SK-N-SH (cell line): ENCODE measurements at regions of chr1 and their contacts with region 1.

Region 1: GRCh38 chr1:20633190-20634064 is at the start of gene PINK1:
- DNase-seq: peak; percentile 95
- H3K4me3 ChIP-seq: peak within 1 kb of the TSS; percentile 64 to 88
- H3K27ac ChIP-seq: peak within 1 kb of the TSS; percentile 60 to 70
- H3K4me1 ChIP-seq: peaks cover 0 to 12% of the 10 kb centered on the region in 2 experiments; a peak in 1 of 4 replicates
- H3K27me3 ChIP-seq: no peaks in the 10 kb centered on the region
- CTCF ChIP-seq: peak; percentile 96
- EP300 ChIP-seq: no peak
- RAD21 ChIP-seq: peak; percentile 66
- polyA plus RNA-seq, gene PINK1: 24.4 and 24.9 TPM in 2 replicates

Region 2: DNA sequence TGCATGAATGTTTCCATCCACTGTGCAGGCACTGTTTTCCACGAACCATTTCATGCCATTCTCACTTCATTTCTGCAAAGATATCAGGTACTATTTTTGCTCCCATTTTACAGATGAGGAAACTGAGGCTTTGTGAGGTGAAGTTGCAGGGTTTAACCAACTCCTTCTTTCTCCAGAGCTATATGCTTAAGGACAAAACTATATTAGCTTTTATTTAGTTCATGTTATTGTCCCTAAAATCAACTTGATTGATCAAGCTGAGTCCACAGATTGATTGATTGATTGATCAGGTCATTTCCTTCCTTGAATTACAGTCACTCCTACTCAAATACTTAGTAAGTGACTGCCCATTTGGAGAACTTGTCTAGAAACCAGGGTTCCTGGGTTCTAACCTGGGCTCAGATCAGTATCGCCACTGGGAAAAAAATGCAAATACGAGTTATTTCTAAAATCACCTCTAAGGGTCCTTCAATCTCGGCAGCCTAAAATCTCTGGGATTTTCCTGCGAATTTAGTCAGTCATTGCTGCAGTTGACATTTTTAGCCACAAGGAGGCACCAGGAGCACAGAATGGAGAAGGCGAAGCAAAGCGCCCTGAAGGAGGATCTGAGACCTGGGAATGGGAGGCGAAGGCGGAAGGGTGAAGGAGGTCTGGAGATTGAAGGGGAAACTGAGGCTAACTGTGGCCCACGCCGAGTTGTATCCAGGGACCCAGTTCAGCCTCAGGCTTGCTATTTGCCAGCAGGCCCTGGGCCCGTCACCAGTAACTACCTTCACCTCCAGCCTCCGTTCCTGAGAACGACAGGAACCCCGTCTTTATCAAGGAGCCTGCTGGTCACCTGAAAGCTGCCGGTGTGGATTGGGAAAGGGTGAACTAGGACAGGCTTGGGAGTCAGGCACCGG is 111.2 kb before region 1 on chr1:
- CTCF ChIA-PET with region 1: interaction called, 49 read pairs
- POLR2A ChIA-PET with region 1: no interaction called
- DNase-seq: peak; percentile 69
- H3K4me3 ChIP-seq: peak overlapping the region in 1 of 2 experiments; percentile 48; a peak in 1 of 4 replicates
- H3K27ac ChIP-seq: no peak overlapping the region
- H3K4me1 ChIP-seq: no peaks in the 10 kb centered on the region; a peak in 1 of 4 replicates
- H3K27me3 ChIP-seq: peaks cover 25% of the 10 kb centered on the region; the same call in 1 of the 2 replicates
- CTCF ChIP-seq: peak; percentile 95
- EP300 ChIP-seq: no peak
- RAD21 ChIP-seq: peak; percentile 94

Region 3: GRCh38 chr1:20551945-20552727 is 81.3 kb before region 1 on chr1 and contains the start of gene FAM43B:
- CTCF ChIA-PET with region 1: interaction called, 18 read pairs
- POLR2A ChIA-PET with region 1: no interaction called
- DNase-seq: peak; percentile 87
- H3K4me3 ChIP-seq: peak within 1 kb of the TSS in 1 of 2 experiments; percentile 36; a peak in 2 of 4 replicates
- H3K27ac ChIP-seq: no peak within 1 kb of the TSS
- H3K4me1 ChIP-seq: peaks cover 0 to 17% of the 10 kb centered on the region in 2 experiments; a peak in 1 of 4 replicates
- H3K27me3 ChIP-seq: peaks cover 59% of the 10 kb centered on the region
- CTCF ChIP-seq: no peak
- EP300 ChIP-seq: no peak
- RAD21 ChIP-seq: no peak
- polyA plus RNA-seq, gene FAM43B: not detected in 2 replicates

Region 4: DNA sequence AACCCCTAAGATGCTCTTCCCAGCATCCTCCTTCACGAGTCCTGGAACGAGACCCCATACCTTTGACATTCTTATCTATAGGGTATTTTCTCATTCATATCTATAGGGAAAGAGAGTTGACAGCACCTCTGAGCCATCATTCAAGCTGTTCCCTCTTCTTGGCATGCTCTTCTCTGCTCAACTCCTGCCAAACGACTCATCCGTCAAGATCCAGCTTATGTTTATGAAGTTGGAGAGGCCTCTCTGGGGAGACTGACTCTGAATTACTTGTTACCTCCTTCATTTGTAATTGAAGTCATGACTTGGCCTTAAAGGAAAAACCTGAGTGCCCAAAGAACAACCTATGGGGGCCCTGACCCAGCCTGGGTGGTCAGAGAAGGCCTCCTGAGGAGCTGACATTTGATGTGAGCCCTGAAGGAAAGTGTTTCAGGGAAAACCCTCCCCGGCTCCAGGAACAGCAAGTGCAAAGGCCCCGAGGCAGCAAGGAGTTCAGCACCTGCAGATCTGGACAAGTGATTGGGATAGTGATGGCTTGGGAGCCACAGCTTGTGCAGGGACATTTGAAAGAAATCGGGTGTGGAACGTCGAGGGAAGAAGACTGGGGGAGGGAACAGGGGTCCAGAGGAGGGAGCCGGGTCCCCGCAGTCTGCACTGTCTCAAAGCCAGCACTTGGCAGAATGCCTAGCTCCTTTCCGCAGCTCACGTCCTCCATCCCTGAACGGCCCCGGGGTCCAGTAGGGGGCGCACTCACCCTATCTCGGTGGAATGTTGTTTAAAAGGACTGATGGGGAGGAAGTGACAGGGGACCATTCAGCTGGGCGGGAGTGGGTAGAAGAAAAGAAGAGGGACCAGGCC is 58.5 kb before region 1 on chr1:
- CTCF ChIA-PET with region 1: interaction called, 97 read pairs
- POLR2A ChIA-PET with region 1: no interaction called
- DNase-seq: peak; percentile 85
- H3K4me3 ChIP-seq: no peak overlapping the region; a peak in 1 of 4 replicates
- H3K27ac ChIP-seq: no peak overlapping the region
- H3K4me1 ChIP-seq: no peaks in the 10 kb centered on the region
- H3K27me3 ChIP-seq: no peaks in the 10 kb centered on the region; the same call in 1 of the 2 replicates
- CTCF ChIP-seq: peak; percentile 80
- EP300 ChIP-seq: no peak
- RAD21 ChIP-seq: peak; percentile 75

Region 5: GRCh38 chr1:20618550-20618949 is 14.9 kb before region 1 on chr1:
- CTCF ChIA-PET with region 1: interaction called, 12 read pairs
- POLR2A ChIA-PET with region 1: no interaction called
- DNase-seq: no peak
- H3K4me3 ChIP-seq: no peak overlapping the region
- H3K27ac ChIP-seq: no peak overlapping the region
- H3K4me1 ChIP-seq: peaks cover 1 to 8% of the 10 kb centered on the region in 2 experiments; a peak in 1 of 4 replicates
- H3K27me3 ChIP-seq: no peaks in the 10 kb centered on the region
- CTCF ChIP-seq: no peak
- EP300 ChIP-seq: no peak
- RAD21 ChIP-seq: no peak

Region 6: GRCh38 chr1:20885121-20885520 is 251.7 kb after region 1 on chr1:
- CTCF ChIA-PET with region 1: no interaction called
- POLR2A ChIA-PET with region 1: no interaction called
- DNase-seq: no peak
- H3K4me3 ChIP-seq: no peak overlapping the region
- H3K27ac ChIP-seq: no peak overlapping the region
- H3K4me1 ChIP-seq: no peaks in the 10 kb centered on the region; a peak in 2 of 4 replicates
- H3K27me3 ChIP-seq: no peaks in the 10 kb centered on the region
- CTCF ChIP-seq: no peak
- EP300 ChIP-seq: no peak
- RAD21 ChIP-seq: no peak